AG04449 (cell line): ENCODE measurements at regions of chr16 and their contacts with region 1.

Region 1: GRCh38 chr16:10918294-10919002 is 23.8 kb downstream of the DEXI start:
- DNase-seq: peak; percentile 59
- H3K4me3 ChIP-seq: no peak overlapping the region
- CTCF ChIP-seq: peak; percentile 95

Region 2: GRCh38 chr16:10737068-10737625 is 181.3 kb before region 1 on chr16:
- CTCF ChIA-PET with region 1: interaction called, 14 read pairs
- POLR2A ChIA-PET with region 1: no interaction called
- DNase-seq: no peak
- H3K4me3 ChIP-seq: no peak overlapping the region
- CTCF ChIP-seq: peak; percentile 75

Region 3: GRCh38 chr16:10751291-10751697 is 167.2 kb before region 1 on chr16:
- CTCF ChIA-PET with region 1: interaction called, 14 read pairs
- POLR2A ChIA-PET with region 1: no interaction called
- DNase-seq: no peak
- H3K4me3 ChIP-seq: no peak overlapping the region
- CTCF ChIP-seq: no peak

Region 4: DNA sequence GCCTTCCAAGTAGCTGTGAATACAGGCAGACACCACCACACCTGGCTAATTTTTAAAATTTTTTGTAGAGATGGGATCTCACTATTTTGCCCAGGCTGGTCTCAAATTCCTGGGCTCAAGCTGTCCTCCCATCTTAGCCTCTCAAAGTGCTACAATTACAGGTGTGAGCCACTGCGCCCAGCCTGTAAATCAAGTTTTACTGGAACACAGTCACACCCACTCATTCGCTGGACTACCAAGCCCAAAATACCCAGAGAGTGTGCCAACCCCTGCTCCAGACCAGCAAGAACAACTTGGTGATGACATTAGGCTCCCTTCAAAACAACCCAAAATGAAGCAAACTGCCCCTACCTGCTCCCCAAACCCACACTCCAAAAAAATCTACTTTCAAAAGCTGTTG is 135.8 kb before region 1 on chr16:
- CTCF ChIA-PET with region 1: no interaction called
- POLR2A ChIA-PET with region 1: no interaction called
- DNase-seq: no peak
- H3K4me3 ChIP-seq: no peak overlapping the region
- CTCF ChIP-seq: no peak

Region 5: GRCh38 chr16:10906914-10907756 is 11.3 kb before region 1 on chr16:
- CTCF ChIA-PET with region 1: interaction called, 20 read pairs
- POLR2A ChIA-PET with region 1: interaction called, 3 read pairs
- DNase-seq: no peak
- H3K4me3 ChIP-seq: no peak overlapping the region
- CTCF ChIP-seq: no peak

Region 6: GRCh38 chr16:11076259-11077018 is 158.0 kb after region 1 on chr16:
- CTCF ChIA-PET with region 1: no interaction called
- POLR2A ChIA-PET with region 1: no interaction called
- DNase-seq: no peak
- H3K4me3 ChIP-seq: no peak overlapping the region
- CTCF ChIP-seq: no peak